ENCODE measurements at regions of chr4 and their contacts with region 1.

Region 1: GRCh38 chr4:148391056-148391455 is 51.2 kb downstream of the NR3C2 start:
- DNase-seq: no peak
- H3K4me3 ChIP-seq: no peak overlapping the region
- H3K4me3 Mint-ChIP-seq: no peak overlapping the region
- H3K27ac Mint-ChIP-seq: no peak overlapping the region
- H3K4me1 ChIP-seq: no peaks in the 10 kb centered on the region
- H3K4me1 Mint-ChIP-seq: no peaks in the 10 kb centered on the region
- H3K27me3 ChIP-seq: no peaks in the 10 kb centered on the region
- H3K27me3 Mint-ChIP-seq: peaks cover 11% of the 10 kb centered on the region
- CTCF ChIP-seq: no peak

Region 2: GRCh38 chr4:148354186-148354585 is 36.9 kb before region 1 on chr4:
- CTCF ChIA-PET with region 1: no interaction called
- POLR2A ChIA-PET with region 1: no interaction called
- intact Hi-C with region 1: loop called (anchors 1 kb)
- DNase-seq: no peak
- H3K4me3 ChIP-seq: no peak overlapping the region
- H3K4me3 Mint-ChIP-seq: no peak overlapping the region
- H3K27ac Mint-ChIP-seq: no peak overlapping the region
- H3K4me1 ChIP-seq: no peaks in the 10 kb centered on the region
- H3K4me1 Mint-ChIP-seq: no peaks in the 10 kb centered on the region
- H3K27me3 ChIP-seq: no peaks in the 10 kb centered on the region
- H3K27me3 Mint-ChIP-seq: no peaks in the 10 kb centered on the region
- CTCF ChIP-seq: no peak

Measured in Caco-2 (cell line).